ENCODE measurements at regions of chr17 and their contacts with region 1.

Region 1: GRCh38 chr17:34961093-34961911 is at the starts of genes CCT6B and ZNF830:
- DNase-seq: peak in 1 of 2 donors; percentile 93
- H3K4me3 ChIP-seq: peak within 1 kb of the TSS; percentile 64 to 80
- H3K27ac ChIP-seq: peak within 1 kb of the TSS; percentile 87
- H3K4me1 ChIP-seq: peaks cover 23% of the 10 kb centered on the region
- H3K27me3 ChIP-seq: no peaks in the 10 kb centered on the region
- CTCF ChIP-seq: no peak
- POLR2A ChIP-seq: peak in 1 of 2 donors; percentile 54
- total RNA-seq, gene CCT6B: 1.7 TPM
- total RNA-seq, gene ZNF830: 7.6 TPM

Region 2: GRCh38 chr17:34913001-34913400 is 48.3 kb before region 1 on chr17:
- intact Hi-C with region 1: no loop called
- DNase-seq: no peak
- H3K4me3 ChIP-seq: no peak overlapping the region
- H3K27ac ChIP-seq: no peak overlapping the region
- H3K4me1 ChIP-seq: no peaks in the 10 kb centered on the region
- H3K27me3 ChIP-seq: no peaks in the 10 kb centered on the region
- CTCF ChIP-seq: no peak
- POLR2A ChIP-seq: no peak

Region 3: DNA sequence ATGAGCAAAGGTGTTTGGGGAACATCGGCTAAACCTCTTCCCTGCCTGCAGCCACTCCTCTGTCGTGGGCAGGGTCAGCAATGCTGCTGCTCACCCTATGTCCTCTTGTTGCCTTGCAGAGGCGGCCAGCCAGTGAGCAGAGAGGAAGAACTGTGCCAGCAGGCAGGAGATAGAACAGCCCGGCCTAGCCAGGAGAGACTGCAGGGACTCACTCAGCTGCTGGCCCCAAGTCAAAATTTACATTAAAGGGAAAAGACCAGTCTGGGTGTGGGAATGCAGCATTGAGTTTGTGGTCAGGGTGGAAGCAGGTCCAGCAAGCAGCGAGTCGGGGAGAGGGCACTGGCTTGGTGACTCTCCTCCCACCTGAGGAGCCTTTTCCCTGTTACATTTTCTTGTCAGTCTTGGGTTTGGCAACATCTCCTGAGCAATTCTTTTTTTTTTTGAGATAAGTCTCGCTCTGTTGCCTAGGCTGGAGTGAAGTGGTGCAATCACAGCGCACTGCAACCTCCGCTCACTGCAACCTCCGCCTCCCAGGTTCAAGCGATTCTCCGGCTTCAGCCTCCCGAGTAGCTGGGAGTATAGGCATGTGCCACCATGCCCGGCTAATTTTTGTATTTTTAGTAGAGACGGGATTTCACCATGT is 41.7 kb after region 1 on chr17:
- intact Hi-C with region 1: loop called (anchors 1 kb)
- DNase-seq: no peak
- H3K4me3 ChIP-seq: no peak overlapping the region
- H3K27ac ChIP-seq: no peak overlapping the region
- H3K4me1 ChIP-seq: peaks cover 4% of the 10 kb centered on the region
- H3K27me3 ChIP-seq: no peaks in the 10 kb centered on the region
- CTCF ChIP-seq: no peak
- POLR2A ChIP-seq: no peak

Region 4: DNA sequence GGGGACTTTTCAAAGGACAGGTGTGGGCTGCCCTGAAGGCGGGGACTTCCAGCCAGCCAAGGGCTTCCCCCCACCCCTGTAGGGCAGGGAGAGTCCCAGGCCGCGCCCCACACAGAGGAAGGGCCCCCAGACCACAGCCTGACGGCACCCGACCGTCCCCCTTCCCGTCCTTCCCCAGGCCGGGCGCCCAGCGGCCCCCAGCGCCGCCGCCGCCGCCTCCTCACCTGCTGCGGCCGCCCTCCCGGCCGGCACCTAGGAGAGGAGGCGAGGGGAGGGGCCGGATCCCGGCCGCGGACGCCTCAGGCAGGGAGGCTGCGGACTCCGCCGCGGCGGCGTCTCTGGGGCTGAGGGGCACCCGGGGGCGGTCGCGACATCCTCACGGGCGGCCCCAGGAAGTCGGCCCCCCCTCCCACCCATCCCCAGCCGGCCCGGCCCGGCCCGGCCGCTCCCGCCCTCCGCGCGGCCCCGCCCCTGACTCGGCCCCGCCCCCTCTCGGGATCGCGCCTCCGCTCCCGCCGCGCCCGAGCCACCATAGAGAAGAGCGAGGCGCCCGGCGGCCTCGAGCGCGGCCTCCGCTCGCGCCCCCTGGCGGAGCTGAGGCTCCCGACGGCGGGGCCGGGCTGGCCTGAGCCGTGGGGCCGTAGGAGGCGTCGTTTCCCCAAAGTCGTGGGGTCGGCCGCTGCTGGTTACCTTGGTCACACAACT is 127.7 kb after region 1 on chr17:
- intact Hi-C with region 1: loop called (anchors 5 kb)
- DNase-seq: no peak
- H3K4me3 ChIP-seq: peak overlapping the region; percentile 94 to 96
- H3K27ac ChIP-seq: peak overlapping the region; percentile 97
- H3K4me1 ChIP-seq: peaks cover 35% of the 10 kb centered on the region
- H3K27me3 ChIP-seq: no peaks in the 10 kb centered on the region
- CTCF ChIP-seq: peak; percentile 55 to 78 (median 76)
- POLR2A ChIP-seq: no peak

Region 5: DNA sequence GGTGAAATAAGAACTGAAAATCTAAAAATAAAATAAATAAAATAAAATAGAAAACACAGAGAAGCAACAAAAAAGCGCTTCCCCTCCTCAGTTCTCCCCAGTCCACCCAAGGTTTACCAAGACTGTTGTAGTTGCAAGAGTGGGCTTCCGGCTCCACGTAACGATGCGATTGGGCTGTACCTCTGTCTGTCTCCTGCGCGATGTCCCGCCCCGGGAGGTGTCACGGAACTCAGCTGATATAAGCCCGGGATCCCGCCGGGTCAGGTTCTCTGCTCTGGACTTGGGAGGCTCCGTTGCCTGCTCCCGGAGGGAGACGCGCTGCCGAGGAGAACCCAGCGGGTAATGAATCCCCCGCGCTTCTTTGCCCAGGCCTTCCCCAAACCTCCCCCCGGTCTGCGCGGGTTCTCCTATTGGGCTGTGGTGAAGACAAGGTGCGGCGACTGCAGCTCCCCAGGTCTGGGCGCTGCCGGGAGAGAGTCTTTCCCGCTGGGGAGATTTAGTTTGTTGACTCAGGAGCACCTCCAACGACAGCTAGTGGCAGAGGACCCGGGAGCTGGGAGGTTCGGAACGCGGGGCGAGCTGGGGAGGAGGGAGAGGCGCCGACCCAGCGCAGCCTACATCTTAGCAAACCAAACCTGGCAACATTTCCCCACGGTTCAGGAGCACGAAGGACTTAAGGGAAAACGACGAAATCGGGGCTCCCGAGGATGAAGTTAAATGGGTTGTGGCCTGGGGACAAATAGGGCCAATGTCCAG is 281.7 kb after region 1 on chr17 and contains the start of gene SLFN5:
- intact Hi-C with region 1: no loop called
- DNase-seq: peak in 1 of 2 donors; percentile 97
- H3K4me3 ChIP-seq: peak within 1 kb of the TSS; percentile 82 to 90
- H3K27ac ChIP-seq: peak within 1 kb of the TSS; percentile 99
- H3K4me1 ChIP-seq: peaks cover 46% of the 10 kb centered on the region
- H3K27me3 ChIP-seq: no peaks in the 10 kb centered on the region
- CTCF ChIP-seq: no peak
- POLR2A ChIP-seq: peak in 1 of 2 donors; percentile 98
- total RNA-seq, gene SLFN5: 27.7 TPM